ENCODE measurements at regions of chr2 and their contacts with region 1.

Region 1: GRCh38 chr2:25521665-25522387 is 151.6 kb downstream of the DTNB start:
- DNase-seq: peak; percentile 89
- H3K4me3 Mint-ChIP-seq: peak overlapping the region; percentile 18
- H3K27ac Mint-ChIP-seq: peak overlapping the region; percentile 45
- H3K4me1 Mint-ChIP-seq: peaks cover 19% of the 10 kb centered on the region
- H3K27me3 Mint-ChIP-seq: no peaks in the 10 kb centered on the region

Region 2: GRCh38 chr2:25314514-25315315 is 207.1 kb before region 1 on chr2:
- intact Hi-C with region 1: loop called (anchors 1 kb)
- DNase-seq: peak; percentile 94
- H3K4me3 Mint-ChIP-seq: peak overlapping the region; percentile 91
- H3K27ac Mint-ChIP-seq: peak overlapping the region; percentile 97
- H3K4me1 Mint-ChIP-seq: peaks cover 44% of the 10 kb centered on the region
- H3K27me3 Mint-ChIP-seq: no peaks in the 10 kb centered on the region

Region 3: GRCh38 chr2:25362049-25362433 is 159.8 kb before region 1 on chr2:
- intact Hi-C with region 1: loop called (anchors 1 kb)
- DNase-seq: peak; percentile 99
- H3K4me3 Mint-ChIP-seq: peak overlapping the region; percentile 84
- H3K27ac Mint-ChIP-seq: peak overlapping the region; percentile 91
- H3K4me1 Mint-ChIP-seq: peaks cover 19% of the 10 kb centered on the region
- H3K27me3 Mint-ChIP-seq: no peaks in the 10 kb centered on the region

Region 4: DNA sequence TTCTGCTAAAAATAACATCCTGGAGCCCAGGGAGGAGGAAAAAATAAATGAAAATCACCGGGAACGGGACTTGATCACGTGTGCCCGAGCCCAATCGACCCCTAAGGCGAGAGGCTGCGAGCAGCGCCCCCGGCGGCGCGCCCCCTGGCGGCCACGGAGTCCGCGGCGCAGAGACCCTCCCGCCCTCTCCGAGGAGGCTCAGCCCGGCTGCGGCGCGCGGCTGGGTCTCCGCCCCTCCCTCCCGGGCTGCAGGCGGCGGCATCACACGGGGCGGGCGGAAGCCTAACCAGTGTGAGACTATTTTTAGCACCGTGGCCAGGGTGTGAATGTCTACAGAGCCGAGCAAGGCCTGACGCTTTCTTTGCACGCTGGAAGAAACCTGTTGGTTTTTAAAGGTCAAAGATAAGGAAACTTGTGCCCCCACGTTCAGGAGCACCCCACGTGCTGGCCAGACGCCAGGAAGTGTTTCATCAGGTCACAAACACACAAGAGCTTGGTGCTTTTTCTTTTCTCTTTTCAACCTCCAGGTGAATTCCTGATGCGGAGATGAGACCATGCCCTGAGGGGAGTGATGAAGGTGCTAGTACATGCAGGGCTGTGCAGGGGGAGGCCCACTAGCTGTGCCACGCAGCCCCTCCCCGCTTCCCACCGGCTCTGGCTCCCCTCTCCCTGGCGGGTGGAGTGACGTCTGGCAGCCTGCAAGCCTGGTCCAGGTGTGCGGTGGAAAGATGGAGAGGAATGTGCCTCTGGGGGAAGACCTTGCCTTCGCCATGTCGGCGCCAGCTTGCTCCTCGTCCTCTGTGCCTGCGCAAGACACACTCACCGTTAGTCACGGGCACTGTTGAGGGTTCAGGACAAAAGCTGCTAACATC is 144.8 kb before region 1 on chr2:
- intact Hi-C with region 1: loop called (anchors 1 kb)
- DNase-seq: peak; percentile 98
- H3K4me3 Mint-ChIP-seq: peak overlapping the region; percentile 76
- H3K27ac Mint-ChIP-seq: peak overlapping the region; percentile 93
- H3K4me1 Mint-ChIP-seq: peaks cover 30% of the 10 kb centered on the region
- H3K27me3 Mint-ChIP-seq: no peaks in the 10 kb centered on the region

Region 5: DNA sequence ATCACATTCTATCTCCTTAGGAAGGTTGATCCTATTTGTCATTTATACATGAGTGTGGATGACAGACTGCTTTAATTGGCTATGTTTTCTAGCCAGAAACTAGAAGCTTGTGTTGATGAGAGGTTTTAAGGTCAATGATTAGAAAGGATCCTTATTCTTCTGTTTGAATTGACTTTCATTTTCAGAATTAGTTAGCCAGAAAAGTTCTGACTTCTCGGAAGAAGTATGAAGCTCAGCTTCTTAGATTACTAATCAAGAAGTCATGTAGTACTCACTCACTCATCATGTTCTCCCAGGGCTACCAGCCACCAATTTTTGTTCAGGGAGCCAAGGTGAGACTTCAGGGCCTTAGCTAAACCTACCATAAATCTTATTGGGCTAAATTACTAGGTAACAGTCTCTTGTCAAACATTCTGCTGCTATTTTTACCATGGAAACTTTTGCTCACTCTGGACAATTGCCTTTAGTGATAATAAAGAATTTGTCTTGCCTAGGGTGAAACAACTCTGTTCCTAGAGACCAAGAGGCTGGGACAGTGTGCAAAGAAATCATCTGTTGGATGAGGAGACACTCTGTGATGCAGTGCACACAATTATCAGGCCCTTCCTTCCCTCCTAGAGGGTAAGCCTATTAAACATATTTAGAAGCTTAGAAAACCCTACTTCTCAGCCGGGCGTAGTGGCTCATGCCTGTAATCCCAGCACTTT is 68.5 kb before region 1 on chr2:
- intact Hi-C with region 1: loop called (anchors 5 kb)
- DNase-seq: peak; percentile 82
- H3K4me3 Mint-ChIP-seq: peak overlapping the region; percentile 57
- H3K27ac Mint-ChIP-seq: peak overlapping the region; percentile 91
- H3K4me1 Mint-ChIP-seq: peaks cover 21% of the 10 kb centered on the region
- H3K27me3 Mint-ChIP-seq: no peaks in the 10 kb centered on the region

Region 6: DNA sequence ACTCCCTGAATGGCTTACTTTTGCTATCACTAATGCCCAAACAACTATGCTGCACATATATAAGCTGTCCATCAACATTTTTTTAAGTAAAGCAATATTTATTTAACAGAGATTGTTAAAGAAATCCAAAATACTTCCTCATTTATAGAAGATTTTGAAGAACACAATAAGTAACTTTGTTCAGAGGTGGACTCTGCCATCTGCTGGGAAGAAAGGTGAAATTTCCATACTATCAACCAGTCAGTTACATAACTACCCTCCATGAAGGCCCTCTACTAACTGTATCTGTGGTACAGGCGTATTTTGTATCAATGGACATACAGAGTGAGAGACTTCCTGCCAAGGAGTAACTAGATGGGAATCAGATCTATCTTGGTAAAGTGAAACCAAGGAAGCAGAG is 45.6 kb after region 1 on chr2:
- intact Hi-C with region 1: loop called (anchors 1 kb)
- DNase-seq: peak; percentile 80
- H3K4me3 Mint-ChIP-seq: no peak overlapping the region
- H3K27ac Mint-ChIP-seq: no peak overlapping the region
- H3K4me1 Mint-ChIP-seq: peaks cover 12% of the 10 kb centered on the region
- H3K27me3 Mint-ChIP-seq: no peaks in the 10 kb centered on the region

Region 7: DNA sequence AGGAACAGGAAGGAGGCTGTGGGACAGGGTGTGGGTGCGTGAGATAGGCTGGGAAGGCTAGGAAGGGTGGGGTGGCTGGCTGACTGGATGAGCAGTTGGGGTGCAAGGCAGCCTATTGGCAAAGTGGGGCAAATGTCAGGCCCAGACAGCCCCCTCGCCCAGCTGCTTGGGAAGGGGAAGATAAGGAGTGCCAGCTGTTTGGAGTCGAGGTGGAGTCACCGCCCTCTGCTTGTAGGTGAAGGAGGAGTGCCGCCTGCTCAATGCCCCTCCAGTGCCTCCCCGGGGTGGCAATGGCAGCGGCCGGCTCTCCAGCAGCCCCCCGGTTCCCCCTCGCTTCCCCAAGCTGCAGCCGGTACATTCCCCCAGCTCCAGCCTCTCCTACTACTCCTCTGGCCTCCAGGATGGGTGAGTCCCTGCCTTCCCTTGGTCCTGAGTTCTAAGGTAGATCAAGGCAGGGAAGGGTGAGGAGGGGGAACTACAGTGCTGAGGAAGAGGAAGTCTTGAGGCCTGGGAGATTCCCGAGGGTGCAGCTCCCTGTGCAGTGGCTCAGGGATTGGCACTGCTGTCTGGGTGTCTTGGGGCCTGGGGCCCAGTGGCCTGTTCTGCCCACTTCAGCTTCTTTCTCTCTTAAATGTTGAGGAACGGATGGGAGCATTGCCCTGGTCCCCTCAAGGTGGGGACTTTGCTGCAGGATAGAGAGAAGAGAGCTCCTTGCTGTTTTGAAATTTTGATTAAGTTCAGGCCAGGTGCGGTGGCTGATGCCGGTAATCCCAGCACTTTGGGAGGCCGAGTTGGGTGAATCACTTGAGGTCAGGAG is 664.3 kb after region 1 on chr2:
- intact Hi-C with region 1: no loop called
- DNase-seq: no peak
- H3K4me3 Mint-ChIP-seq: peak overlapping the region; percentile 83
- H3K27ac Mint-ChIP-seq: peak overlapping the region; percentile 14
- H3K4me1 Mint-ChIP-seq: peaks cover 13% of the 10 kb centered on the region
- H3K27me3 Mint-ChIP-seq: peaks cover 2% of the 10 kb centered on the region

Measured in activated CD4-positive, alpha-beta T cell treated with anti-CD3 and anti-CD28 coated beads, Interleukin-2, amount 10 ng/mL, durations not matched to agents 24 days and 14 days (primary cell).